Ascending aorta (tissue), 2 donors: ENCODE measurements at regions of chr4 and their contacts with region 1.

Region 1: GRCh38 chr4:88720451-88721428 is 23.1 kb upstream of the NAP1L5 start:
- DNase-seq: no peak
- H3K4me3 ChIP-seq: no peak overlapping the region
- H3K27ac ChIP-seq: peak overlapping the region; percentile 65 to 75
- H3K4me1 ChIP-seq: peaks cover 10 to 29% of the 10 kb centered on the region in 2 donors
- H3K27me3 ChIP-seq: no peaks in the 10 kb centered on the region
- CTCF ChIP-seq: no peak

Region 2: GRCh38 chr4:88828842-88829571 is 108.3 kb after region 1 on chr4:
- intact Hi-C with region 1: loop called (anchors 5 kb)
- DNase-seq: no peak
- H3K4me3 ChIP-seq: no peak overlapping the region
- H3K27ac ChIP-seq: no peak overlapping the region
- H3K4me1 ChIP-seq: peaks cover 0 to 2% of the 10 kb centered on the region in 2 donors
- H3K27me3 ChIP-seq: no peaks in the 10 kb centered on the region
- CTCF ChIP-seq: no peak